AG04450 (cell line): ENCODE measurements at regions of chr14 and their contacts with region 1.

Region 1: GRCh38 chr14:89252887-89253547 is 164.0 kb downstream of the FOXN3 start:
- DNase-seq: no peak
- H3K4me3 ChIP-seq: no peak overlapping the region
- H3K27ac ChIP-seq: no peak overlapping the region
- H3K27me3 ChIP-seq: no peaks in the 10 kb centered on the region
- CTCF ChIP-seq: no peak

Region 2: DNA sequence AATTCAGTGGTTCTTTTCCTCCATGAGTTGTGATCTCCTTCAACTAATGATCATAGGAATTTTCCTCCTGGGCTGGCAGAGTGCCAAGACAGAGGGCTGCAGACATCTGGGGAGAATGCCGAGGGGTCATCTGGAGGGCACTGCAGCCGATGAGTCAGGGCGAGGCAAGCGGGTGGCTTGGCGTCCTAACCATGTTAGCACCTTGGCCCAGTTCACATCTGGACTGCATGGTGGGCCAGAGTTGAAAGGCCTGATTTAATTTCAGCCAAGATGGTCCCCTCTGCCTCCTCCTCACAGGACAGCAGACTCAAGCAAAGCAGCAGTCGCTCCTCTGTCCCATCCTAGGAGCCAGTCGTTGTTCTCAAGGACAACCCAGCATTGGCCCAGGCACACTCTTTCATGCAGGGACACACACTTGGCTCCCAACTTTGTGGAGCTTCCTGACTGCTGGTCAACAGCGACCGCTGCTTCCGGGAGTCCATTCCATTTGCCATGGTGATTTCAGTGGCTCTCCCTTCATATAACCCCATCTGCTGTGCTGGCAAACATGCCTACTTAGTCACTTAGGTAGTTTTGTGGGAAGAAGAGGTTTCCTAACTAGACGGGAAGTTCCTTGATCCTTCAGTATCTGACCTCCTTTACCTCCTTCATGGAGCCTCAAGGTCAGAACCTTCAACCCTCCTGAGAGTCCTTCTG is 266.7 kb before region 1 on chr14:
- CTCF ChIA-PET with region 1: no interaction called
- POLR2A ChIA-PET with region 1: no interaction called
- DNase-seq: peak; percentile 58
- H3K4me3 ChIP-seq: no peak overlapping the region
- H3K27ac ChIP-seq: peak overlapping the region; percentile 31
- H3K27me3 ChIP-seq: no peaks in the 10 kb centered on the region
- CTCF ChIP-seq: no peak

Region 3: GRCh38 chr14:89225607-89226006 is 27.4 kb before region 1 on chr14:
- CTCF ChIA-PET with region 1: interaction called, 4 read pairs
- POLR2A ChIA-PET with region 1: interaction called, 10 read pairs
- DNase-seq: no peak
- H3K4me3 ChIP-seq: no peak overlapping the region
- H3K27ac ChIP-seq: no peak overlapping the region
- H3K27me3 ChIP-seq: no peaks in the 10 kb centered on the region
- CTCF ChIP-seq: no peak

Region 4: DNA sequence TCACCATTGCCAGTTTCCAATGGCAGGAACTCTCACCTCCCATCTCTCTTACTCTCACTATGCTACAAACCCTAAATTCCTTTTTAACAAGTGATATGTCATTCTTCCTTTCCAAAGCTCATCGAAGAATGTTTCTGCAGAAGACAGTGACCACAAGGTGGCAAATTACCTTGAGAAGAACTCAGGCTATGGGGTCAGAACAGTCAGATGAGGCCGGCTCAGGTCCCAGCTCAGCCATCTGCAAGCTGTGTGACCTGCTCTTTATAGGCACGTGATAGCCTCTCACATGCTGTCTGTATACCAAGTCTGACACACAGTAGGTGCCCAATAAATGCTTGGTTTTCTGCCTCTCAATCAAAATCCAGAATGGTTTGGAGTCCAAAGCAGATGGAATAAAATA is 83.3 kb after region 1 on chr14:
- CTCF ChIA-PET with region 1: no interaction called
- POLR2A ChIA-PET with region 1: no interaction called
- DNase-seq: no peak
- H3K4me3 ChIP-seq: no peak overlapping the region
- H3K27ac ChIP-seq: no peak overlapping the region
- H3K27me3 ChIP-seq: no peaks in the 10 kb centered on the region
- CTCF ChIP-seq: no peak

Region 5: GRCh38 chr14:89397569-89398230 is 144.7 kb after region 1 on chr14:
- CTCF ChIA-PET with region 1: no interaction called
- POLR2A ChIA-PET with region 1: no interaction called
- DNase-seq: no peak
- H3K4me3 ChIP-seq: no peak overlapping the region
- H3K27ac ChIP-seq: no peak overlapping the region
- H3K27me3 ChIP-seq: no peaks in the 10 kb centered on the region
- CTCF ChIP-seq: no peak